ENCODE measurements at regions of chr16 and their contacts with region 1.

Region 1: DNA sequence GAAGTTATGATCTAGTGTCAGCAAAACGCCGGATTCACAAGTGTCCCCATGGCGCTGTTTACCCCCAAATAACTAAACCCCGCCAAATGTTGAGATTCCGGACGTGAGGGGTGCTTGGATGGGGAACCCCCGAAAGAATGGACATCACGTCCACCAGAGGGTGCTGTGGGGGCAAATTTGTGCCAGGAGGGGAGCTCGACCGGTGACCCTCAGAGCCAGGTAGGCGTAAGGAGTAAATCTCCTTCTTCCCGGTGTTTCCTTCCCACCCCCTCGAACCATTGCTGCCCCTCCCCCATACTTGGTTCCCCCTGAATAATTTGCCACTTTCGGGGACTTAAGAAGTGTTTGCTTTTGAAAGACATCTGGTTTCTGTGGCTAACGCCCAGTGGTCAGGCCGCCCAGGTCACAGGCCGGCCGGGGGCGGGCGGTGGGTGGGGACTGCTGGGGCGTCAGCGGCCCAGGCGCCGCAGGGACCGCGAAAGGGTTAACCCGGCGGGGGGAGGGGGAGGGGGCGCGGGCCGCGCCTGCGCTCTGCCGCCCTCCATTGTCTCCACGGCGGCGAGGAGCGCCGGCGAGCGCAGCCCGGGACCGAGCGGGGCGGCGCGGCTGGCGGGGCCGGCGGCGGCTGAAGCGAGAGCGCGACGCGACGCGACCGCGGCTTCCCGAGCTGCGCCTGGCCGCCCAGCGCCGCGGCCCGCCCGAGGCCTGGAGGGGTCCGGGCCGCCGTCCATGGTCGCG is at the start of gene ZNRF1:
- DNase-seq: peak; percentile 88
- H3K4me3 ChIP-seq: peak within 1 kb of the TSS; percentile 99
- H3K27ac ChIP-seq: peak within 1 kb of the TSS; percentile 92
- H3K4me1 ChIP-seq: peaks cover 52% of the 10 kb centered on the region
- H3K27me3 ChIP-seq: no peaks in the 10 kb centered on the region
- CTCF ChIP-seq: peak; percentile 84
- total RNA-seq, gene ZNRF1: 22.3 TPM

Region 2: GRCh38 chr16:75108792-75109734 is 110.4 kb after region 1 on chr16:
- intact Hi-C with region 1: loop called (anchors 5 kb)
- DNase-seq: peak; percentile 82
- H3K4me3 ChIP-seq: peak overlapping the region; percentile 50
- H3K27ac ChIP-seq: peak overlapping the region; percentile 94
- H3K4me1 ChIP-seq: peaks cover 99% of the 10 kb centered on the region
- H3K27me3 ChIP-seq: no peaks in the 10 kb centered on the region
- CTCF ChIP-seq: no peak

Region 3: DNA sequence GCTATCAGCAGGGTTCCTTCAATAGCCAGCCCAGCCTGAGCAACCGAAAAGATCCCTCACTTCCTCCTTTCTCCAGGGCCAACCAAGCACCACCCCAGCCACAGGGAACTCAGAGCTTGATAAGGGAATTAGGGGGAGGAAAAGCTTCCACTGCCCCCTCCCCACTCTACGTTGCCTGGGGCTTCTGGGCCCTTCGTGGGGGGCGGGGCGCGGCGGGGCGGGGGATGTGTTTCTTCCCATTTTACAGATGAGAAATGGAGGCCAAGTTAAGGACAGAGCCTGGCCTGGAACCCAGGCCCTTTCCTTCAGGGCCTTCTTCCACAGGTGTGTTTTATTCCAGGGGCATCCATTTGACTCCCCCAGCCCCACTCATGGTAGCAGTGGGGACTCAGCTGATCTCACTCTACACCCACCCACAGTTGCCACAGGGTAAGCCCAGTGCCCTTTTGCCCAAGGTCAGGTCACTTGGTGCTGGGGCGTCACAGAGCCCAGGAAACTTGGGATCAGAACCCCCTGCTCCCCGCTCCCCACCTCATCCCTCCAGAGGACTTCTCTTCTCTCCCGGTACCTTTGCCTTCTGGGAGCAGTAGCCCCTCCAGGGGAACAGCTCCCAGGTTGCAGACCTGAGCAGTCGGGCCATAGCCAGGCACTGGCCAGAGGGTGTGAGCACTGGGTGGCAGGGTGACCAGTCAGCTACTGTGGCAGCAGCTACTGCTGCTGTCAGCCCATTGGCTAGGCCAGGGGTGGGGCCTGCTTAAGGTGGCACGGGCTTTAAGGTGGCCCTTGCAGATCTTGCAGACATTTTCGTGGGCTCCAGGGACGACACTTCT is 117.6 kb after region 1 on chr16 and contains the start of gene LDHD:
- intact Hi-C with region 1: loop called (anchors 5 kb)
- DNase-seq: peak; percentile 83
- H3K4me3 ChIP-seq: peak within 1 kb of the TSS; percentile 73
- H3K27ac ChIP-seq: peak within 1 kb of the TSS; percentile 82
- H3K4me1 ChIP-seq: peaks cover 56% of the 10 kb centered on the region
- H3K27me3 ChIP-seq: no peaks in the 10 kb centered on the region
- CTCF ChIP-seq: no peak
- total RNA-seq, gene LDHD: 97.9 TPM

Measured in left ventricle myocardium inferior (tissue), 1 donor.